ENCODE measurements at regions of chr5 and their contacts with region 1.

Region 1: DNA sequence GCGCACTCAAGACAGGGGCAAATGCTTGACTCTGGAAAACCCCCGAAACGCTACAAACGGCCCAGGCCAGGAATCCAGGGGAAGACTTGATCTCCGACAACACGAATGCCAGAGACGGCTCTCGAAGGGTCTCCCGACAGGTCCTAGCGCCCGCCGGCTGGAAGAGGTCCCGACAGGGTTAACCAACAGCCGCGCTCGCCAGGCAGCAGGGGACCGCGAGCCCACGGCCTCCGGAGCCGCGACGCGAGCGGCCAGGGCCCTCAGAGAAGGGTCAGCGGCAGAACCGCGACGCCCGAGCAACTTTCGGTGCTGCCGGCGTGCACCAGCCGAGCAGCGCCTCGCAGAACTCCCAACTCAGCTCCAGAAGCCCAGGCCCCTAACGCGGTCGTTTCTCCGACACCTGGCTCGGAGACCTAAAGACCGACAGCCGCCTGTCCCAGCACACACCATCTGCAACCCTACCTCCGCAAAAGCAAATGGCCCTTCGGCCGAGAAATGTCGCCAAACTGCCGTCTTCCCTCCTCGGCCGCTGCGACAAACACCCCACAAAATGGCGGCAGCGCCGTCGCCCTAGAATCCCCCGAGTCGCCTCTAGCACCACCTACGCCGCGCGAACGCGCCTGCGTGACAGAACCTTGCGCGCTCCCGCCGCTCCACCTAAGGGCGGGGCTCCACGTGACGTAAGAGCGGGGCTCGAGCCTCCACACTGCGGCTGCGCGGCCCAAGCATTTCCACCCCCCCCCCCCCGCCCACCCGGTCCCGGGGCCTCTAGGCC is at the start of gene CLK4:
- DNase-seq: peak; percentile 92 to 94
- ATAC-seq: peak; percentile 86 to 87
- H3K4me3 ChIP-seq: peak within 1 kb of the TSS; percentile 75 to 98 (median 80)
- H3K27ac ChIP-seq: peak within 1 kb of the TSS; percentile 91 to 100 (median 96)
- H3K4me1 ChIP-seq: peaks cover 34 to 41% of the 10 kb centered on the region in 2 donors
- H3K27me3 ChIP-seq: no peaks in the 10 kb centered on the region
- CTCF ChIP-seq: peak in 1 of 5 experiments; percentile 5
- POLR2A ChIP-seq: peak; percentile 73 to 84
- total RNA-seq, gene CLK4: 11.4 to 36.7 (median 14.3) TPM

Region 2: GRCh38 chr5:178120868-178121357 is 505.8 kb before region 1 on chr5:
- in situ Hi-C with region 1: no loop called
- intact Hi-C with region 1: loop called (anchors 10 kb)
- DNase-seq: peak; percentile 89 to 95
- ATAC-seq: peak; percentile 81 to 89
- H3K4me3 ChIP-seq: peak overlapping the region; percentile 45 to 70 (median 54)
- H3K27ac ChIP-seq: peak overlapping the region; percentile 73 to 85 (median 78)
- H3K4me1 ChIP-seq: peaks cover 37 to 38% of the 10 kb centered on the region in 2 donors
- H3K27me3 ChIP-seq: peaks cover 5 to 12% (median 10%) of the 10 kb centered on the region in 3 donors
- CTCF ChIP-seq: peak; percentile 53 to 82 (median 69)
- POLR2A ChIP-seq: peak in 1 of 2 donors; percentile 14

Region 3: DNA sequence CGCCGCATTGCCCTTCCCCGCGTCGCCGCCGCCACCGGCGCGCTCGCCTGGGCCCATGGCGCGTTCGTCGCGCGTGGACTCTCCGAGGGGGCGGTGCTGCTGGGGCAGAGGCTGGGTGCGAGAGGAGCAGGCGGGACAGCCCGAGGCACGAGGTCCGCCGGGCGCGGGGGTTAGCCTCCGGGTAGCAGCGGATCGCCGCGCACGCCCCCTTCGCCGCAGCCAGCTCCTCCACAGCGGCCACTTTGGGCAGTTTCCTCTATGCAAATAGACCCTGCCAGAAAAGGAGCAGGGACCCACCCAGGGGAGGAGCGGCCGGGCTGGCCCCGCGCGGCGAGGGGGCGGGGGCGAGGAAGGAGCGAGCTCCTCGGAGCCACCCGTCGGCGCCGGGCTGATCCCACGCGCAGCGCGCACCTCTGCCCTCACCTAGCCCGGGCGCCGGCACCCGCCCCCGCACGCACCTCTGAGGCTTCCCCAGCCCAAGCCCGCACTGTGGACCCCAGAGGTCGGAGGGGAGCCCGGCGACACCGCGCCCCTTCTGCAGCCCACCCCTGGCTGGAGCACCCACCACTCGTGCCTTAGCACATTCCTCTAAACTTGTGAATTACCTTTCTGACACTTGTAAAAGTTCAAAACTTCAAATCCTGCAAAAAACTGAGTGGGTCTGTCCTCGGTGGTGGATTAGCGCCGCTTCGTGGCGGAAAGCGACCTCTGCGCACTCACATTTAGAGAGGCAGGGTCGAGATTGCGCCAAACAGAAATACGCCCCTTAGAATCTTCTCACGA is 36.3 kb before region 1 on chr5 and contains the start of gene COL23A1:
- in situ Hi-C with region 1: no loop called
- intact Hi-C with region 1: loop called (anchors 1 kb)
- DNase-seq: peak; percentile 43 to 53
- ATAC-seq: peak; percentile 65
- H3K4me3 ChIP-seq: peak within 1 kb of the TSS; percentile 53 to 65 (median 58)
- H3K27ac ChIP-seq: peak within 1 kb of the TSS; percentile 70 to 86 (median 78)
- H3K4me1 ChIP-seq: peaks cover 9 to 23% of the 10 kb centered on the region in 2 donors
- H3K27me3 ChIP-seq: peaks cover 0 to 2% (median 0%) of the 10 kb centered on the region in 3 donors
- CTCF ChIP-seq: peak; percentile 42 to 73 (median 64)
- POLR2A ChIP-seq: peak; percentile 16 to 18
- total RNA-seq, gene COL23A1: 0.62 to 1.1 (median 0.97) TPM in 3 of 4 donors, not detected in the other

Region 4: GRCh38 chr5:178642351-178642971 is 15.8 kb after region 1 on chr5:
- in situ Hi-C with region 1: no loop called
- intact Hi-C with region 1: no loop called
- DNase-seq: no peak
- ATAC-seq: no peak
- H3K4me3 ChIP-seq: no peak overlapping the region
- H3K27ac ChIP-seq: no peak overlapping the region
- H3K4me1 ChIP-seq: no peaks in the 10 kb centered on the region
- H3K27me3 ChIP-seq: no peaks in the 10 kb centered on the region
- CTCF ChIP-seq: no peak
- POLR2A ChIP-seq: no peak

Region 5: GRCh38 chr5:178859625-178860531 is 233.2 kb after region 1 on chr5 and contains the start of gene ZNF354B:
- in situ Hi-C with region 1: no loop called
- intact Hi-C with region 1: loop called (anchors 10 kb)
- DNase-seq: peak; percentile 86
- ATAC-seq: peak; percentile 99
- H3K4me3 ChIP-seq: peak within 1 kb of the TSS; percentile 61 to 78 (median 66)
- H3K27ac ChIP-seq: peak within 1 kb of the TSS; percentile 70 to 85 (median 81)
- H3K4me1 ChIP-seq: peaks cover 2 to 6% of the 10 kb centered on the region in 2 donors
- H3K27me3 ChIP-seq: no peaks in the 10 kb centered on the region
- CTCF ChIP-seq: peak in 1 of 5 experiments; percentile 29
- POLR2A ChIP-seq: peak; percentile 61 to 73
- total RNA-seq, gene ZNF354B: 4.4 to 11.3 (median 5.0) TPM

Region 6: GRCh38 chr5:179559284-179560252 is 932.9 kb after region 1 on chr5:
- in situ Hi-C with region 1: no loop called
- intact Hi-C with region 1: loop called (anchors 2 kb)
- DNase-seq: peak; percentile 95 to 98
- ATAC-seq: peak; percentile 100
- H3K4me3 ChIP-seq: peak overlapping the region; percentile 56 to 63 (median 58)
- H3K27ac ChIP-seq: peak overlapping the region; percentile 73 to 87 (median 79)
- H3K4me1 ChIP-seq: peaks cover 9 to 24% of the 10 kb centered on the region in 2 donors
- H3K27me3 ChIP-seq: no peaks in the 10 kb centered on the region
- CTCF ChIP-seq: no peak
- POLR2A ChIP-seq: peak; percentile 84 to 90

Measured in gastrocnemius medialis (tissue), 4 donors.